ENCODE measurements at regions of chr1 and their contacts with region 1.

Region 1: GRCh38 chr1:204411451-204412204 is at the start of gene PPP1R15B:
- DNase-seq: peak; percentile 92 to 98 (median 96)
- H3K4me3 ChIP-seq: peak within 1 kb of the TSS; percentile 57 to 99 (median 90)
- H3K27ac ChIP-seq: peak within 1 kb of the TSS; percentile 84 to 100 (median 97)
- H3K27me3 ChIP-seq: no peaks in the 10 kb centered on the region
- CTCF ChIP-seq: peak in 25 of 56 donors; percentile 3 to 48 (median 19)
- total RNA-seq, gene PPP1R15B: 26.2 to 55.9 (median 35.6) TPM

Region 2: GRCh38 chr1:203795441-203796235 is 616.0 kb before region 1 on chr1 and contains the starts of genes ZBED6 and ZC3H11A:
- intact Hi-C with region 1: loop called in 1 of 2 experiments (anchors 10 kb)
- DNase-seq: peak; percentile 98 to 100 (median 99)
- H3K4me3 ChIP-seq: peak within 1 kb of the TSS; percentile 55 to 97 (median 80)
- H3K27ac ChIP-seq: peak within 1 kb of the TSS; percentile 72 to 99 (median 96)
- H3K27me3 ChIP-seq: no peaks in the 10 kb centered on the region
- CTCF ChIP-seq: peak in 27 of 56 donors; percentile 3 to 52 (median 18)
- total RNA-seq, gene ZBED6: 16.5 to 57.6 (median 29.2) TPM
- total RNA-seq, gene ZC3H11A: 51.9 to 91.9 (median 71.8) TPM

Region 3: DNA sequence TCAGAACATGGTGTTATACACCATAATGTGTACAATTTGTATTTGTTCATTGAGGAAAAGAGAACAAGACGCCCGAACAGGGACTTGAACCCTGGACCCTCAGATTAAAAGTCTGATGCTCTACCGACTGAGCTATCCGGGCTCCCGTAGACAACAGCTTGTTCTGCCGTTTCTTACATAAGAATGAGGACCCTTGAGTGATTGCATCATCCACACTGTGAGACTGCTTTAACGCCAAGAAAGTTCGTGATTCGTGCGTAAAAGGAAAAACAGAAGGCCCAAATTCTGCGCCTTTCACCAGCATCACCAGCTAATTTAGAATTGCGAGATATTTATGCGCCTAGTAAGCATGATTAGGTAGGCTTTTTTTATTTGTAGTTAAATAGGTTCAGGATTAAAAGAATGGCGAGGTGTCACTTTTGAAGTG is 95.3 kb after region 1 on chr1:
- intact Hi-C with region 1: loop called in 1 of 2 experiments (anchors 5 kb)
- DNase-seq: peak in 8 of 10 donors; percentile 66 to 87 (median 79)
- H3K4me3 ChIP-seq: peak overlapping the region; percentile 51 to 96 (median 73)
- H3K27ac ChIP-seq: peak overlapping the region; percentile 66 to 100 (median 96)
- H3K27me3 ChIP-seq: no peaks in the 10 kb centered on the region
- CTCF ChIP-seq: peak in 5 of 56 donors; percentile 6 to 24 (median 13)

Measured in dorsolateral prefrontal cortex (tissue), 120 donors.